ENCODE measurements at regions of chr1 and their contacts with region 1.

Region 1: DNA sequence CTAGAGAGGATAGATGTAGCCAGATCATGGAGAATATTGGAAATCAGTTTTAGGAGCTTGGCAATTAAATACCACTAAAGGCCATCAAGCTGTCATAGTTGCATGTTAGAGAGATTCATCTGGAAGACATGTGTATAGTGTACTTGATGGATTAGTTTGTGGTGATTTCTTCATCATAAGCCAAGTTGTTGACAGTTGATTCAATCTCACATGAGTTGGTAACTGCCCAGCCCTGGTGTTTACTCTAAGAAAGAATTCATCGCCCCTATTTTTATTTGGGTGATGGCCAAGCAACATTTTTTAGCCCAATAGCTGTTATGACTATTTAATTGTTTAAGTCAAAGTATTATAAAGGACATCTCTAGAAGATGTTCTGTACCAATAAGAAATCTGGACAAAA is 737.6 kb downstream of the PLA2G4A start:
- DNase-seq: no peak
- H3K4me3 ChIP-seq: no peak overlapping the region
- H3K27ac ChIP-seq: no peak overlapping the region
- H3K4me1 ChIP-seq: no peaks in the 10 kb centered on the region
- H3K27me3 ChIP-seq: no peaks in the 10 kb centered on the region
- CTCF ChIP-seq: no peak

Region 2: GRCh38 chr1:187433598-187433997 is 132.8 kb before region 1 on chr1:
- CTCF ChIA-PET with region 1: no interaction called
- POLR2A ChIA-PET with region 1: no interaction called
- intact Hi-C with region 1: no loop called
- DNase-seq: no peak
- H3K4me3 ChIP-seq: no peak overlapping the region
- H3K27ac ChIP-seq: no peak overlapping the region
- H3K4me1 ChIP-seq: no peaks in the 10 kb centered on the region
- H3K27me3 ChIP-seq: no peaks in the 10 kb centered on the region
- CTCF ChIP-seq: no peak

Region 3: DNA sequence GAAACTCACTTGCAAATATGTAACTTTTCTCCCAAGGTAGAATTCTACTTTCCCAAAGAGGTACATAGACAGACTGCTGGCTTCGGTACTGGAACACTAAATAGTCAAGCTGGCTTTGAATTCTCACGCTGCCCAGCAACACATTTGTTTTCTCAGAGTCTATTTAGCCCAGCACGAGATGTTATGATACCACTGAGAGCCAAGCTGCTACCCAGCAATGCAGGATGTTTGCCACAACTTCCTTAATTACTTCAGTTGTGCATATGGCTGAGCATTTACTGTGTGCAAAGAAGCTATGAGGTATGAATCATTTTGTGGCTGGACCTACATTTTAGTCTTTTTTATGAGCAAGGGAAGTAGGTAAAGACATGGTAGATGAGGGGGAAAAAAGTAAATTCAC is 55.6 kb after region 1 on chr1:
- CTCF ChIA-PET with region 1: no interaction called
- POLR2A ChIA-PET with region 1: no interaction called
- intact Hi-C with region 1: loop called (anchors 10 kb)
- DNase-seq: no peak
- H3K4me3 ChIP-seq: no peak overlapping the region
- H3K27ac ChIP-seq: no peak overlapping the region
- H3K4me1 ChIP-seq: no peaks in the 10 kb centered on the region
- H3K27me3 ChIP-seq: no peaks in the 10 kb centered on the region
- CTCF ChIP-seq: no peak

Region 4: DNA sequence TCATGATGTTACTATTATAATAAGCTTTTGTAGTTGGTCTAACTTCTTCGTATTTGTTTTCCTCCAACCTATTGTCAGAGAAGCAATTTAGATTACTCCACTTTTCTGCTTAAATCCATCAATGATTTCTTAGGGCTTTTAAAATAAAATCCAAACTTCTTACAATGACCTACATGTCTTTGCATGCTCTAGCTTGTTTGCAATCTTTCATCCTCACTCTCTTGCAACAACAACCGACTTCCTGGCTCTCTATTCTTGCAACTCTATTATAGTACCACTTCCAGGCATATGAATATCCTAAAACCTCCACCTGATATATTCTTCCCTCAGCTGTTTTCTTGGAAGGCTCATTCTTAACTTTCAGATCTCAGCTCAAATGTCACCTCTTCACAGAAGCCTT is 551.1 kb after region 1 on chr1:
- CTCF ChIA-PET with region 1: no interaction called
- POLR2A ChIA-PET with region 1: no interaction called
- intact Hi-C with region 1: no loop called
- DNase-seq: no peak
- H3K4me3 ChIP-seq: no peak overlapping the region
- H3K27ac ChIP-seq: no peak overlapping the region
- H3K4me1 ChIP-seq: no peaks in the 10 kb centered on the region
- H3K27me3 ChIP-seq: no peaks in the 10 kb centered on the region
- CTCF ChIP-seq: no peak